Activated CD8-positive, alpha-beta T cell treated with anti-CD3 and anti-CD28 coated beads, Interleukin-2, amount 10 ng/mL, durations not matched to agents 7 days and 5 days (primary cell): ENCODE measurements at regions of chr9 and their contacts with region 1.

Region 1: DNA sequence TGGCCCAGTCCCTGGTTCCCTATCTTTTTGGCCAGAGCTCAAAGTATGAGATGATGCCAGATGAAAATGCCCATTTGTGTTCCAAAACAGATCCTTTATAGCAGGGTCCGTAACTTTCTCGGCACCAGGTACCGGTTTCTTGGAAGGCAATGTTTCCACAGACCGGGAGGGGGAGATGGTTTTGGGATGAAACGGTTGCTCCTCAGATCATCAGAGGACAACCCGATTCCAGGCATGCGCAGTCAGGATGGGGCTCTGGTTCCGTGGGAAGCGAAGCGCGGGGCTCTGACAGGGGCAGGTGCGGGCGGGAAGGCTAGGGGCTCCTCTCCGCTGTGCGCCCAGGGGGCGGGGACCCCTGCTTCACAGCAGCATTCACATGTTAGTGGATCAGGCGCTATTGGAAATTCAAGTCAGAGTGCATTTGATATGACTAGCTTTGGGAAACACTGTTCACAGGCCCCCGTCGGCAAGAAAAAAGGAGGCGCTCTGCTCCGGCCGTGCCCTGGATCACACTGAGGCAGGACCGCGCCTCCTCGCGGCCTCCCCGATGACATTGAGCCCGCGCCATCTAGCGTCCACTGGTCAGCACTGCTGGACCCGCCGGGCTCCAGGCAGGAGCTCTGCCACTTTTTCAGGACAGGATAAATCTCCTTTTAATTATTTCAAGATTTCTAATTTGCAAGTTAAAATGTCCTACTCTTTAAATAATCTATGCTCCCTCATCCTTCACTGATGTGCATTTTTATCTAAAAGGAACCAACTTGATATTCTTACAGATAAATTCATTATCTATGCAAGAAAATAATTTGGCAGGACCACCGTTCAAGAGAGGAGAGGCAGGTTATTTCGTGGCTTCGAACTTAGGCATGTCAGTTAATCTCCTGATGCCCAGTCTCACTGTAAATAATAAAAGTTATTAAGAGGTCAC is 190.0 kb downstream of the FANCC start:
- DNase-seq: peak; percentile 79
- ATAC-seq: peak; percentile 96
- H3K4me3 Mint-ChIP-seq: no peak overlapping the region
- H3K27ac Mint-ChIP-seq: no peak overlapping the region
- H3K4me1 Mint-ChIP-seq: no peaks in the 10 kb centered on the region
- H3K27me3 Mint-ChIP-seq: no peaks in the 10 kb centered on the region

Region 2: DNA sequence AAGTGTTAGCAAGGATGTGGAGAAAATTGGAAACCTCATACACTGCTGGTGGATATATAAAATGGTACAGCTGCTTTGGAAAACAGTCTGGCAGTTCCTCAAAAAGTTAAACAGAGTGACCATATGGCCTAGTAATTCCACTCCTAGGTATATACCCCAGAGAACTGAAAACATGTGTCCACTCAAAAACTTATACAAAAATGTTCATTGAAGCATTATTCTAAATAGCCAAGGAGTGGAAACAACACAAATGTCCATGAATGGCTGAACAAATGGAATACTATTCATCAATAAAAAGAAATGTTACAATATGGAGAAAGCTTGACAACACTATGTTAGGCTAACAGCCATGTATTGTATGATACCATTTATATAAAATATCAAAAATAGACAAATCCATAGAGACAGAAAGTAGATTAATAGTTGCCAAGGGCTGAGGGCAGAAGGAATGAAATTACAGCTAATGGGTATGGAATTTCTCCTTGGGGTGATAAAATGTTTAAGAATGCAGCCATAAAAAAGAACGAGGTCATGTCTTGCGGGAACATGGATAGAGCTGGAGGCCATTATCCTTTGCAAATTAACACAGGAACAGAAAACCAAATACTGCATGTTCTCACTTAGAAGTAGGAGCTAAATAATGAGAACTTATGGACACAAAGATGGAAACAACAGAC is 454.6 kb before region 1 on chr9:
- CTCF ChIA-PET with region 1: interaction called, 194 read pairs
- POLR2A ChIA-PET with region 1: no interaction called
- DNase-seq: no peak
- ATAC-seq: no peak
- H3K4me3 Mint-ChIP-seq: no peak overlapping the region
- H3K27ac Mint-ChIP-seq: no peak overlapping the region
- H3K4me1 Mint-ChIP-seq: peaks cover 10% of the 10 kb centered on the region
- H3K27me3 Mint-ChIP-seq: peaks cover 9% of the 10 kb centered on the region

Region 3: DNA sequence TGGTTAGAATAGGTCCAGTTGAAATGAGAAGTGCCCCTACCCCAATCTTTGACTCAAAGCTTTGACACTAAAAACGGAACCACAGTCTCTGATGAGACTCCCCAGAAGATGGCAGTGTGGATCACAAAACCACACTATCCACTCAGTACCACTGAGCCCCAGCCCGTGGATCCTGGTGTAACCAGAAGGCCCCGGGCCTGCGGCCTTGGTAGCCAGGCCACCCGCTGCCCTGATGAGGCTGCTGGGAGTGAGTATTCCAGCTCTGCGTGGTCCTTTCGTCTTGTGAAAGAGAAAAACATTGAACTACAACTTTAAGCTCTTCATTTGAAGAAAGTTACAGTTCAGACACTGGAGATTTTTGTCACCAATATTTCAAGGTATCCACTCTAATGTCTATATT is 446.0 kb before region 1 on chr9:
- CTCF ChIA-PET with region 1: interaction called, 194 read pairs
- POLR2A ChIA-PET with region 1: no interaction called
- DNase-seq: peak; percentile 62
- ATAC-seq: peak; percentile 77
- H3K4me3 Mint-ChIP-seq: no peak overlapping the region
- H3K27ac Mint-ChIP-seq: no peak overlapping the region
- H3K4me1 Mint-ChIP-seq: no peaks in the 10 kb centered on the region
- H3K27me3 Mint-ChIP-seq: peaks cover 30% of the 10 kb centered on the region

Region 4: DNA sequence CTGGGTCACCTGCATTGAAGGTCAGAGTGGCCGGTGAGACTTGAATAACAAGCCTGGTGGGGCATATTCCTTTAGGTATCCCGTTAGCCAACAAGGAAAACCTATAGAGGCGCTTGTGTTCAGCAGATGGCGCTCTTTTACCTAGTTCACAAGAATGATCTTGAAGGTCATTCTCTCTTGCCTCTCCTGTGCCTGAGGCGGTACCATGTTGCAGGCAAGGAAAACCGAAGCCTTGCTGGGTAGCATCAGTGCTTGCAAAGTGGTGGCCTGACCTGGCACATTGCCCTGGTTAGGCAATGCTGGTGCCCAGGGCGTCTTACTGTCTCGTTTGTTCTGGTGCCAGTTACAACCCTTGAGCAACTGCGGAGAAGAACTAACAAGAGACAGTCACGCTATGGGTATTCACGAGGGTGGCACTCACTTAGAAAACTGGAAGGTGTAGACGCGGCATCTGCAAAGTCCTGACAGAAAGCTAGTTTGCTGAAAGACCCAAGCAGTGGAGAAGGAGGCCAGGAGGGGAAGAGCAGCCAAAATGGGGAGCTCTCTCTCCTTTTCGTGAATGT is 344.3 kb before region 1 on chr9:
- CTCF ChIA-PET with region 1: interaction called, 33 read pairs
- POLR2A ChIA-PET with region 1: no interaction called
- DNase-seq: peak; percentile 57
- ATAC-seq: no peak
- H3K4me3 Mint-ChIP-seq: no peak overlapping the region
- H3K27ac Mint-ChIP-seq: no peak overlapping the region
- H3K4me1 Mint-ChIP-seq: peaks cover 5% of the 10 kb centered on the region
- H3K27me3 Mint-ChIP-seq: no peaks in the 10 kb centered on the region

Region 5: DNA sequence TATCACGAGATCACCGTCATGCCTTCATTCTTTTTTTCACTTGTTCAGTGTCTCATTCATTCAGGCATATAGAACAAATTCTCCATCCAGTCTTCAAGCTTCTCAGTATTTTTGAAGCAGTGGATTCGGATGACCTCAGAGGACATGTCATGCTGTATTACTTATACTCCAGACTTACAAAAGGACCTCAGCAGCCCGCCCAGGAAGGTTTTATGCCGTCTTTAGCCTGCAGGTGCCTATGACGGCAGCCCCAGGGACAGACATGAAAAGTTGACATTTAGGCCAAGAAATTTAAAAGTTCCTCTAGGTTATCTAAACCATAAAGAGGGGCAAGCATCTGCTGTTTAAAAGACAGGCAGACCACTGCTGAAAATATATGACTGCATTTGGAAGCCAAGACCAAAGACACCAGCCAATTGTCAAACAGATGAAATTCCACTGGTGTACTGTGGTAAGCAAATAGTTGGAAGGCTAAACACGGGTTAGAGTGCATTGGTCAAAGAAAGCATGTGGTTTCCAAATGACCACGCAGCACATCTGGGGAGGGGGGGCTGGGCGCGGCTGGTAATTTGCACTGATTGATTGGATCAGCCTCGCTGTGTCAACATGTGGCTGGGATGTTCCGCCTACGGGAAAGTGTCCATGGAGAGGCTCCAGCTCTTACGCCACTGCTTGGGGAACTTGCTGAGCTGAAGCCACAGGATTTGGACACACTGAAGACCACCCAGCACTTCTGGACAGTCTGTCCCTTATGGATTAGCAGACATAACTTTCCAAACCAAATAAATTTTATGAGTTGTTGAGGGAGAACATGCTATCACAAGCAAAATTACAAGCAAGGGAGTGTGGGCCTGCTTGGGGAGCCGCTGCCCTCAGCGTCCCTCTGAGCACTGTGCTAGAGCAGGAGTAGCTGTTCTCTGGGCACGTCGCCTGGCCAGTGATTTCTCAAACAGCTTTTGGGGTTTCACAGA is 16.4 kb after region 1 on chr9:
- CTCF ChIA-PET with region 1: interaction called, 21 read pairs
- POLR2A ChIA-PET with region 1: no interaction called
- DNase-seq: no peak
- ATAC-seq: no peak
- H3K4me3 Mint-ChIP-seq: no peak overlapping the region
- H3K27ac Mint-ChIP-seq: no peak overlapping the region
- H3K4me1 Mint-ChIP-seq: peaks cover 3% of the 10 kb centered on the region
- H3K27me3 Mint-ChIP-seq: no peaks in the 10 kb centered on the region

Region 6: GRCh38 chr9:95249986-95250385 is 122.5 kb after region 1 on chr9:
- CTCF ChIA-PET with region 1: no interaction called
- POLR2A ChIA-PET with region 1: no interaction called
- DNase-seq: no peak
- ATAC-seq: no peak
- H3K4me3 Mint-ChIP-seq: no peak overlapping the region
- H3K27ac Mint-ChIP-seq: no peak overlapping the region
- H3K4me1 Mint-ChIP-seq: no peaks in the 10 kb centered on the region
- H3K27me3 Mint-ChIP-seq: no peaks in the 10 kb centered on the region